Activated T-helper 1 cell treated with anti-CD3 and anti-CD28 coated beads, Interleukin-12 subunit alpha, Interleukin-12 subunit beta, Interleukin-2, Interleukin-4 antibody, amounts not matched to agents 30 ng/mL and 10 ng/mL and 1 ng/mL, durations not matched to agents 14 hours and 24 hours and 36 hours (primary cell): ENCODE measurements at regions of chr3 and their contacts with region 1.

Region 1: GRCh38 chr3:187679638-187680396 is 9.6 kb upstream of the SST start:
- DNase-seq: peak; percentile 40
- H3K4me3 Mint-ChIP-seq: no peak overlapping the region
- H3K27ac Mint-ChIP-seq: no peak overlapping the region
- H3K4me1 Mint-ChIP-seq: peaks cover 14% of the 10 kb centered on the region
- H3K27me3 Mint-ChIP-seq: peaks cover 27% of the 10 kb centered on the region

Region 2: GRCh38 chr3:186653080-186653707 is 1026.6 kb before region 1 on chr3:
- intact Hi-C with region 1: no loop called
- DNase-seq: no peak
- H3K4me3 Mint-ChIP-seq: no peak overlapping the region
- H3K27ac Mint-ChIP-seq: no peak overlapping the region
- H3K4me1 Mint-ChIP-seq: peaks cover 5% of the 10 kb centered on the region
- H3K27me3 Mint-ChIP-seq: peaks cover 8% of the 10 kb centered on the region

Region 3: GRCh38 chr3:187223799-187224198 is 456.0 kb before region 1 on chr3:
- intact Hi-C with region 1: loop called (anchors 1 kb)
- DNase-seq: no peak
- H3K4me3 Mint-ChIP-seq: no peak overlapping the region
- H3K27ac Mint-ChIP-seq: no peak overlapping the region
- H3K4me1 Mint-ChIP-seq: no peaks in the 10 kb centered on the region
- H3K27me3 Mint-ChIP-seq: peaks cover 5% of the 10 kb centered on the region

Region 4: GRCh38 chr3:187616307-187616972 is 63.4 kb before region 1 on chr3:
- intact Hi-C with region 1: loop called (anchors 1 kb)
- DNase-seq: peak; percentile 22
- H3K4me3 Mint-ChIP-seq: no peak overlapping the region
- H3K27ac Mint-ChIP-seq: no peak overlapping the region
- H3K4me1 Mint-ChIP-seq: no peaks in the 10 kb centered on the region
- H3K27me3 Mint-ChIP-seq: peaks cover 8% of the 10 kb centered on the region